Naive thymus-derived CD4-positive, alpha-beta T cell (primary cell): ENCODE measurements at regions of chr2 and their contacts with region 1.

Region 1: DNA sequence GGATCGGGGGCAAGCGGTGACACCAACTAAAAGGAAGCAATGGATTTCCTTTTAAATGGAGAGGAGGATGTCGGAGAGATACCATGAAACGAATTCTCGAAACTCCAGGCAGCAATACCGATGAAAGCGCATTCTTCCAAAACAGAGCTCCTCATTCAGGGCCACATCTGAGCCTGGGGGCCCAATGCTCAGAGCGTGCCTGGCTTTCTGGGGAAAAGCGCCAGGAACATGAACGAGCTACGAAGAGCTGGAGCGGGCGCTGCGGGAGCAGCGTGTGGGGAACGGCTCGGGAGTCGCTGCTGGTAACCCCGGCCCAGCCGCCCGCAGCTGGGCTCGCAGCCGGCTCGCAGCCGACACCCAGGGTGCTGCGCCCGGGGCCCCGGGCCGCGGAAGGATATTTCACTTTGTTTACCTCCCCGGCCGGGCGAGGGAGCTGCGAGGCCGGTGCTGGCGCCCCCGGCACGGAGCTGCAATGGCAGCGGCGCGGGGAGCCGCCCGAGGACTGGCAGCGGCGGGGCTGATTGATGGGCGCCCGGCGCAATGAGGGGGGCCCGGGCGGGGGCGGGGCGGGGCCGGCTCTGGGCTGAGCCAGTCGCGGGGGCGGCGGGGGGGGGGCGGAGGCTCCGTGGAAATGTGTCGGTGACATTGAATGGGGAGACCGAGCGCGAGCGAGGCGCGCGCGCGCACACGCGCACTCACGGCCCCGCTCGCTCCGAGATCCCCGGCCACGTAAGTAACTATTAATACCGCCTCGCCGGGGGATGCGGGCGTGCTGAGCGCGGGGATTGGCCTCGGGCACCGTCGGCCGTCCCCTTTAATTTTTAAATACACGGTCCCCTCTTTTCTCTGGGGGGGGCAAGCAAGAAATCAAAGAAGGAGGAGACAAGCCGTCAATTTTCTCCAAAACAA is at the start of gene TRIB2:
- DNase-seq: peak; percentile 78 to 90 (median 88)
- ATAC-seq: peak; percentile 88
- H3K4me3 ChIP-seq: peak within 1 kb of the TSS; percentile 86
- H3K4me3 Mint-ChIP-seq: peak within 1 kb of the TSS; percentile 88 to 100 (median 99)
- H3K27ac ChIP-seq: peak within 1 kb of the TSS; percentile 88
- H3K27ac Mint-ChIP-seq: peak within 1 kb of the TSS; percentile 93 to 97 (median 96)
- H3K4me1 ChIP-seq: peaks cover 10 to 18% of the 10 kb centered on the region in 2 donors
- H3K4me1 Mint-ChIP-seq: peaks cover 32 to 65% (median 56%) of the 10 kb centered on the region in 7 donors
- H3K27me3 ChIP-seq: no peaks in the 10 kb centered on the region
- H3K27me3 Mint-ChIP-seq: peaks cover 0 to 15% (median 0%) of the 10 kb centered on the region in 5 donors
- total RNA-seq, gene TRIB2: 63.1 to 125 (median 110) TPM

Region 2: DNA sequence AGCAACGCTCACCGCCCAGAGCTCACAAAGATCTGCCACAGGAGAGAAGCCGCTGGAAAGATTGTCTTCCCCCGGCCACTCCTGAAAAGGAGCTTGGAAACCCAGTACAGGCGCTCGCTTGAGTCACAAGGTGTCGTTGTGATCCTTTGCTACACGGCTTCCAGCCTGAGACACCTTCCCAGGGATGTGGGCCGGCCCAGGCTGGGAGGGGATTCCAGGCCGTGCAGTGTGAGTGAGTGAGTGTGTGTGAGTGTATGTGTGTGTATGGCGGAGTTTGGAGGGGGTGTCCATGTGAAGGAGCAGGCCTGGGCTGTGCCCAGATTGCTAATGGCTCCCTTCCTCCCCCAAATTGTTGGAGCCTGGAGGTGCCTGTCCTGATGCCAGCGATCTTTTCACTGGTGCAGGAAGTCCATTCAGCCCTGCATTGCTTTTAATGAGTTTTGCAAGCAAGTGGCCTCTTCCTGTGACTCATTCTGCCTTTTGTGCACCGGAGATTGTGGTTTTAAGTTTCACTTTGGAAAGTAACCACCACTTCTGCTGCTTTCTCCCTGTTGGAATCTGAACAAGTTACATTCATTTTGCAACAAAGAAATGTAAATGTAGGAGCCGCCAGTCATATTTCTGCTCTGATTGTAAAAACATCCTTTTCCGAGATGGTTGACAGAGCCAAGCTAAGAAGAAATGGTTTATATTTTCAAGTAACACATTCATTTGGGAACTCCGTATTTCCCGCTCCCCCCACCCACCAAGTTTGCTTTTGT is 886.4 kb before region 1 on chr2:
- CTCF ChIA-PET with region 1: interaction called, 7 read pairs
- POLR2A ChIA-PET with region 1: interaction called, 5 read pairs
- intact Hi-C with region 1: loop called (anchors 1 kb)
- DNase-seq: peak in 8 of 9 donors; percentile 53 to 73 (median 63)
- ATAC-seq: peak; percentile 86
- H3K4me3 ChIP-seq: peak overlapping the region; percentile 60
- H3K4me3 Mint-ChIP-seq: peak overlapping the region; percentile 80 to 97 (median 84)
- H3K27ac ChIP-seq: peak overlapping the region; percentile 46
- H3K27ac Mint-ChIP-seq: peak overlapping the region; percentile 21 to 87 (median 78)
- H3K4me1 ChIP-seq: peaks cover 20% of the 10 kb centered on the region in 2 donors
- H3K4me1 Mint-ChIP-seq: peaks cover 18 to 44% (median 33%) of the 10 kb centered on the region in 7 donors
- H3K27me3 ChIP-seq: no peaks in the 10 kb centered on the region
- H3K27me3 Mint-ChIP-seq: peaks cover 0 to 50% (median 0%) of the 10 kb centered on the region in 5 donors

Region 3: GRCh38 chr2:12044857-12045256 is 671.7 kb before region 1 on chr2:
- CTCF ChIA-PET with region 1: interaction called, 6 read pairs
- POLR2A ChIA-PET with region 1: interaction called, 9 read pairs
- intact Hi-C with region 1: loop called in 1 of 2 experiments (anchors 1 kb)
- DNase-seq: peak in 6 of 9 donors; percentile 69 to 88 (median 80)
- ATAC-seq: peak; percentile 93
- H3K4me3 ChIP-seq: peak overlapping the region; percentile 2
- H3K4me3 Mint-ChIP-seq: peak overlapping the region; percentile 31 to 78 (median 62)
- H3K27ac ChIP-seq: peak overlapping the region; percentile 9
- H3K27ac Mint-ChIP-seq: peak overlapping the region; percentile 21 to 88 (median 78)
- H3K4me1 ChIP-seq: peaks cover 16 to 42% of the 10 kb centered on the region in 2 donors
- H3K4me1 Mint-ChIP-seq: peaks cover 16 to 80% (median 65%) of the 10 kb centered on the region in 7 donors
- H3K27me3 ChIP-seq: no peaks in the 10 kb centered on the region
- H3K27me3 Mint-ChIP-seq: peaks cover 0 to 19% (median 0%) of the 10 kb centered on the region in 5 donors

Region 4: DNA sequence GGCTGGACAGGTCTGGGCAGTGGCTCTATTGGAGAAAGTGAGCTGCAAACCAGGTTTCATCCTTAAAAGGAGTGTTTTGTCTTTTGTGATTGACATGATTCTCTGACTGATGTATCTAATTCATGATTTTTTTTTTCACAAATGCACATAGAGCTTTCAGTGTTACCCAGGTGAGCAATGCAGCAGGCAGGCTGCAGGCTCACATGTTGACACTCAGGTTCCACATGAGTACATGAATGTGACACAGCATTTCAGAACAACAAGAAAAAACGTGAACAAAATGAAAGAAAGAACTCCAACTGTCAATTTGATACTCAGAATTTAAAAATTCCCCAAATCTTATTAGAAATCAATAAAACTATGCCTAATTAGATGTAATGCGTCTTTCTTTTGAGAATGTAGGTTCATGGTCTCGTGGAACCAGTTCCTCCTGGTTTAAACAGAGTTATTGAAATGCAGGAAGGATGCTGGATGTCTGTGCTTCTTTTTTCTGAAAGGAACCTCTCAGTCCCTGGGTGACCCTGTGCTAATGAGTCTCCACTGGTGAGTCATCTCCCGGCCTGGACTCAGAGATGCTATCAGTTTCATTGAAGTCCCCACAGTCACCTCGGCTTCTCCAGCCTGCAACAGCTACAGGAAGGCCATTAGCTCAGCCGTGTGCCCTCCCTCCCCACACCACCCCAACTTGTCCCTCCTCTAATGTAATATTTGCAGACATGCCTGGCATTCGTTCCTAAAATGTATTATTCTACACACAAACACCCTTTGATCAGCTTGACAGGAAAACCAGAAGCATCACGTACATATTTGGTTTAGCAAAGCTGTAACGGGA is 539.7 kb before region 1 on chr2:
- CTCF ChIA-PET with region 1: interaction called, 4 read pairs
- POLR2A ChIA-PET with region 1: interaction called, 3 read pairs
- intact Hi-C with region 1: loop called (anchors 2 to 5 kb)
- DNase-seq: peak in 1 of 9 donors; percentile 13
- ATAC-seq: peak; percentile 83
- H3K4me3 ChIP-seq: peak overlapping the region; percentile 21
- H3K4me3 Mint-ChIP-seq: peak overlapping the region in 9 of 10 donors; percentile 25 to 76 (median 62)
- H3K27ac ChIP-seq: no peak overlapping the region
- H3K27ac Mint-ChIP-seq: peak overlapping the region in 8 of 9 donors; percentile 8 to 95 (median 58)
- H3K4me1 ChIP-seq: peaks cover 10 to 25% of the 10 kb centered on the region in 2 donors
- H3K4me1 Mint-ChIP-seq: peaks cover 33 to 67% (median 52%) of the 10 kb centered on the region in 7 donors
- H3K27me3 ChIP-seq: no peaks in the 10 kb centered on the region
- H3K27me3 Mint-ChIP-seq: peaks cover 0 to 7% (median 0%) of the 10 kb centered on the region in 5 donors

Region 5: DNA sequence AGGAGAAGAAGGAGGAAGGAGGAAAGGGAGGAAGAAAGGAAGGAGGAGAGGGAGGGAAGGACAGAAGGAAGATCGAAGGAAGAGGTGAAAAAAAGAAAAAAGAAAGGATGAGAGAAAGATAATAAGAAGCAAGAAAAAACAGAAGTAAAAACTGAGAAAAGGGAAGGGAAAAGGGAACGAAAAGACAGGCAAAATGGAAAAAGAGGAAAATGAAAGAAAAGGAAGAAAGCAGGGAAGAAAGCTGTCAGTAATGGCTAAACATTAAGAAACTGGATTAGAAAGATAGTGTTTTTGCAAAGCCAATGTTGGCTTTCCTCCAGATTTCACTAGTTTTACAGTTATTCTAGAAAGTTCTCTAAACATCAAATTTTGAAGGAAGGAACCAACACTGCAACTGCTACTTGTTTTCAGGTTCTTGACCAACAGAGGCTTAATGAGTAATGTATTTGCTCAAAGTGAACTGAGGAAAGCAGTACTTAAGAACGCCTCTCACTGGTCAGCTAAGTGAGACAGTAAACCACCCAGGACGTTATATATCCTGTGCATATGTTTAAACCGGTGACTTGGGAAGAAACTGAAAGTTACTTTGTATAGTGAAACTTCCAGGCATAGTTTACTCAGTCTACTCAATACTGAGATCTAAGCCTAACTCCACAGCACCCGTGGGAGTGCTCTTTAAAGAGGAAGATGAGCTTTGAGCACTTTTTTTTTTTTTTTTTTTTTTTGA is 286.0 kb before region 1 on chr2:
- CTCF ChIA-PET with region 1: interaction called, 5 read pairs
- POLR2A ChIA-PET with region 1: interaction called, 5 read pairs
- intact Hi-C with region 1: loop called (anchors 1 to 5 kb)
- DNase-seq: peak in 6 of 9 donors; percentile 10 to 28 (median 20)
- ATAC-seq: peak; percentile 87
- H3K4me3 ChIP-seq: peak overlapping the region; percentile 47
- H3K4me3 Mint-ChIP-seq: peak overlapping the region; percentile 31 to 83 (median 77)
- H3K27ac ChIP-seq: peak overlapping the region; percentile 22
- H3K27ac Mint-ChIP-seq: peak overlapping the region; percentile 60 to 91 (median 82)
- H3K4me1 ChIP-seq: peaks cover 0 to 12% of the 10 kb centered on the region in 2 donors
- H3K4me1 Mint-ChIP-seq: peaks cover 25 to 70% (median 49%) of the 10 kb centered on the region in 7 donors
- H3K27me3 ChIP-seq: no peaks in the 10 kb centered on the region
- H3K27me3 Mint-ChIP-seq: no peaks in the 10 kb centered on the region

Region 6: GRCh38 chr2:12856934-12857601 is 140.5 kb after region 1 on chr2:
- CTCF ChIA-PET with region 1: no interaction called
- POLR2A ChIA-PET with region 1: interaction called, 3 read pairs
- intact Hi-C with region 1: loop called in 1 of 2 experiments (anchors 2 kb)
- DNase-seq: peak in 7 of 9 donors; percentile 46 to 81 (median 73)
- ATAC-seq: peak; percentile 91
- H3K4me3 ChIP-seq: peak overlapping the region; percentile 1
- H3K4me3 Mint-ChIP-seq: no peak overlapping the region
- H3K27ac ChIP-seq: no peak overlapping the region
- H3K27ac Mint-ChIP-seq: peak overlapping the region in 1 of 9 donors; percentile 2
- H3K4me1 ChIP-seq: peaks cover 40 to 56% of the 10 kb centered on the region in 2 donors
- H3K4me1 Mint-ChIP-seq: peaks cover 0 to 25% (median 14%) of the 10 kb centered on the region in 7 donors
- H3K27me3 ChIP-seq: no peaks in the 10 kb centered on the region
- H3K27me3 Mint-ChIP-seq: peaks cover 6 to 12% (median 10%) of the 10 kb centered on the region in 5 donors